AG04450 (cell line): ENCODE measurements at regions of chr1 and their contacts with region 1.

Region 1: DNA sequence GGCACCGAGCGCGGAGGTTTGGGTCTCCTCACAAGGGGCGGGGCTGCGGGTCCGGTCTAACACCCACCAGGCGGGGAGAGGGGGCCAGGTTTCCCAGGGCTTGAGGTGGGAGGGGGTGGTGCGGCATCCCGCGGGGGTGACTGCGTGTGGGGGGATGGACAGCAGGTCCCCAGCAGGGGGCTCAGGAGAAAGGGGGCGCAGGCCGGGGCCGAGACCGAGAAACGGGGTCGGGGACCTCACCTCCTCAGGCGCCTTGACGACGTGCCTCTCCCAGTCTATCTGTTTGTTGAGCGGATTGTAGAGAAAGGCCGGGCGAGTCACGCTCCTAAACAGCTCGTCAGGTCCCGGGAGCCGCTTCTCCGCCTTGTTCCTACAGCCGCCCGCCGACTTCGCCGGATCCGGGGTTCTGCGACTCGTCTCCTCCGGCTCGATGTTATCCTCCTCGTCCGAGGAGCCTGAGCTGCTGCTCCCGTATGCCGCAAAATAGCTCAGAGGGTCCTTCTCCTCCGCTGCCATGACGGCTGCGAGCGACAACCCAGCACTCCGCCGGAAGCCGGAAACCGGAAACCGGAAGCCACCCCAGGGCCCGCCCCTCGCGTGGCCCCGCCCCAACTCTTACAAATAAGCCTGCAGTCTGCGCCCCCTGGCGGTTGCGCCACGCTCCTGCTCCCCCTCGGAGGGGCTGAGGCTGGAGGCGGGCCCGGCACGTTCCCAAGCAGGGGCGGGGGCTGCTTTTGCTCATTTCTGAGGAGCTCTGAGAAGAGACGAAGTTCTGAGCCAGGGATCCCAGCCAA is at the start of gene C1orf52:
- DNase-seq: peak; percentile 83
- H3K4me3 ChIP-seq: peak within 1 kb of the TSS; percentile 89
- H3K27ac ChIP-seq: peak within 1 kb of the TSS; percentile 42
- H3K27me3 ChIP-seq: no peaks in the 10 kb centered on the region
- CTCF ChIP-seq: peak; percentile 91
- polyA plus RNA-seq, gene C1orf52: 28.0 and 31.2 TPM in 2 replicates

Region 2: GRCh38 chr1:85091671-85092280 is 167.5 kb before region 1 on chr1:
- CTCF ChIA-PET with region 1: interaction called, 10 read pairs
- POLR2A ChIA-PET with region 1: no interaction called
- DNase-seq: no peak
- H3K4me3 ChIP-seq: no peak overlapping the region
- H3K27ac ChIP-seq: no peak overlapping the region
- H3K27me3 ChIP-seq: peaks cover 2% of the 10 kb centered on the region
- CTCF ChIP-seq: no peak

Region 3: GRCh38 chr1:85134576-85135395 is 124.5 kb before region 1 on chr1:
- CTCF ChIA-PET with region 1: interaction called, 17 read pairs
- POLR2A ChIA-PET with region 1: interaction called, 3 read pairs
- DNase-seq: peak; percentile 59
- H3K4me3 ChIP-seq: no peak overlapping the region
- H3K27ac ChIP-seq: peak overlapping the region; percentile 69
- H3K27me3 ChIP-seq: no peaks in the 10 kb centered on the region
- CTCF ChIP-seq: 0 out of 2 replicates have a peak, but pooled peaks have one; percentile 0

Region 4: DNA sequence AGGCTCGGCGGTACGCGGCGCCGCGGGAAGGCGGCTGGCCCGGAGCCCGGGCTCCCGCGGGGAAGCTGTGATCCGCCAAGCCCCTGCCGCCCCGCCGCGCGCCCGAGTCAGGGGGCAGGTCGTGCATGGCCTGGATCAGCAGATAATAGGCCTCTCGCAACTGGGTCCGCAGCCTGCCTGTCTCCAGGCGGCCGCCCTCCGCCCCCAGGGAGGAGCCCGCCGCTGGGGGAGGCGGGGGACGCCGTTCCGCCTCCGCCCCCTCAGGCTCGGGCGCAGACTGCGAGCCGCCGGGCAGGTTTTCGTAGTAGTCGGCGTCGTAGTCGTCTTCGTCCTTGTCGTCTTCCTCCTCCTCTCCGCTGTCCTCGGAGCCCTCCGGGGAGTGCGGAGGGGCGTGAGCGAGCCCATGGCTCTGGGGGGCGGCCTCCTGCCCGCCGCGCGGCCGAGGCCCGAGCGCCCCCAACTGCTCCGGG is 58.4 kb before region 1 on chr1 and contains the start of gene SYDE2:
- CTCF ChIA-PET with region 1: interaction called, 11 read pairs
- POLR2A ChIA-PET with region 1: no interaction called
- DNase-seq: no peak
- H3K4me3 ChIP-seq: peak within 1 kb of the TSS; percentile 79
- H3K27ac ChIP-seq: peak within 1 kb of the TSS; percentile 39
- H3K27me3 ChIP-seq: no peaks in the 10 kb centered on the region
- CTCF ChIP-seq: no peak
- polyA plus RNA-seq, gene SYDE2: 4.7 and 5.7 TPM in 2 replicates

Region 5: GRCh38 chr1:85276215-85276977 is 17.1 kb after region 1 on chr1 and contains the start of gene BCL10:
- CTCF ChIA-PET with region 1: interaction called, 100 read pairs
- POLR2A ChIA-PET with region 1: interaction called, 8 read pairs
- DNase-seq: peak; percentile 94
- H3K4me3 ChIP-seq: peak within 1 kb of the TSS; percentile 98
- H3K27ac ChIP-seq: peak within 1 kb of the TSS; percentile 92
- H3K27me3 ChIP-seq: no peaks in the 10 kb centered on the region
- CTCF ChIP-seq: no peak
- polyA plus RNA-seq, gene BCL10: 17.2 and 19.4 TPM in 2 replicates

Region 6: GRCh38 chr1:85448358-85448757 is 189.0 kb after region 1 on chr1:
- CTCF ChIA-PET with region 1: no interaction called
- POLR2A ChIA-PET with region 1: no interaction called
- DNase-seq: no peak
- H3K4me3 ChIP-seq: no peak overlapping the region
- H3K27ac ChIP-seq: no peak overlapping the region
- H3K27me3 ChIP-seq: no peaks in the 10 kb centered on the region
- CTCF ChIP-seq: no peak

Region 7: DNA sequence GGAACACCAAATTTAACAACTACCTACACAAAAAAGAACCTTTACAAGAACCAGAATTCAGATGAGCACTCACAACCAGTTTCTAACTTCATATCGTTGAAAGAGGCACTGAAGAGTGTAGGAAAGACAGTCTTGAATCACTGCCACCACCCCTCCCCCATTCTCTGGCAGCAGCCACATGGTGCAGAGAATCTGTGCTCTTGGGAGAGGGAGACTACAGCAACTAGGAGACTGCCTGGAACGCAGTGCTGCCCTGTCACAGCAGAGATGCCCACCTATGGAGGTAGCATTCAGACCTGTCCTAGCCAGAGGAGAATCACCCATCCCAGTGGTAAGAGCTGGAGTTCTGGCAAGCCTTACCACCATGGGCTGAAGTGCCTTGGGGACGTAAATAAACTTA is 328.5 kb after region 1 on chr1:
- CTCF ChIA-PET with region 1: no interaction called
- POLR2A ChIA-PET with region 1: no interaction called
- DNase-seq: no peak
- H3K4me3 ChIP-seq: no peak overlapping the region
- H3K27ac ChIP-seq: no peak overlapping the region
- H3K27me3 ChIP-seq: no peaks in the 10 kb centered on the region
- CTCF ChIP-seq: no peak